ENCODE measurements at regions of chr1 and their contacts with region 1.

Region 1: GRCh38 chr1:87953732-87954344 is 625.2 kb downstream of the LMO4 start:
- DNase-seq: peak; percentile 57
- H3K4me3 ChIP-seq: no peak overlapping the region
- H3K27ac ChIP-seq: no peak overlapping the region
- H3K4me1 ChIP-seq: no peaks in the 10 kb centered on the region
- H3K27me3 ChIP-seq: no peaks in the 10 kb centered on the region
- CTCF ChIP-seq: peak; percentile 63 to 74 (median 69)
- POLR2A ChIP-seq: no peak

Region 2: DNA sequence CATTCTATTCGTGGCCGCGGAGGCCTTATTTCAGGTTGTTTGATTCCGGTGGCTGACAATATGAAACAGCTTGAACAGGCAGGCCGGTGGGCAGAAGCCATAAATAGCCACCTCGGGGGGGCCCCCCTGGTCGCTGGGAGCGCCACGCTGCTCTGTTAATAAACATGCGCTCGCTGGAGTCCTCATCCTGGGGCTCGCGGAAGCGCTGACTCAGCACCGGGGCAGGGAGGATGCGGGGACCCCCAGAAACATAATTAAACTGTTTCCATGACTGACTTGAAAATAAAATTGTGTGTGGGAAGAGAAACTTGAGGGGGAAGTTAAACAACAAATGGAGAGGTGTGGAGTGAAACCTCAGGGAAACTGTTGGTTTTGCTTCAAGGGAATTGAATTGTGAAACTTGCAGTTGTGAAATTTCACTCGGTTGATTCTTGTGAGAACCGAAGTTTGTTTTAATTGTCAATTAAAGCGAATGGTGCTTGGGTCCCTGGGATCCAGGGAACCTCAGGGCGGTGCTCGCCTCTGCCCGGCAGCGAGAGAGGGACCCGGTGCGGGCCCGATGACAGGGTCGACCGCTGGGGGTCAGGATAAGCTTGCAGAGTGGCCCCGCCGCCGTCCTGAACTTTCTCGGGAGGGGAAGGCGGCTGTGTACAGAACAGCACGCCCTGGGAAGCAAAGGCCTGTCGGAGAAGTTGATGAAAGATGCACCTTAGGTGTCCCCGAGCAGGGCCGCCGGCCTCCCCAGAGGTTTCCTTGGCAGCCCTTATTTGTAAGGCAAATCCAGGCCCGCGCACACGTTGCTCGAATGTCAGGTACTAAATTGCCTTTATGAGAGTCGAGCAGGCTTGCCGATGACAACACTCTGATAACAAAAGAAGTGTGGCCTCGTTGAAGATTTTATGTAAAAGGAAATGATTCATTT is 802.1 kb before region 1 on chr1:
- intact Hi-C with region 1: loop called (anchors 10 kb)
- DNase-seq: peak; percentile 8
- H3K4me3 ChIP-seq: no peak overlapping the region
- H3K27ac ChIP-seq: peak overlapping the region in 1 of 2 donors; percentile 43
- H3K4me1 ChIP-seq: no peaks in the 10 kb centered on the region
- H3K27me3 ChIP-seq: no peaks in the 10 kb centered on the region
- CTCF ChIP-seq: peak in 3 of 4 experiments; percentile 24 to 41 (median 38)
- POLR2A ChIP-seq: no peak

Region 3: GRCh38 chr1:87684194-87684593 is 269.6 kb before region 1 on chr1:
- intact Hi-C with region 1: loop called (anchors 5 kb)
- DNase-seq: peak; percentile 5
- H3K4me3 ChIP-seq: peak overlapping the region; percentile 18 to 32
- H3K27ac ChIP-seq: peak overlapping the region; percentile 47 to 63
- H3K4me1 ChIP-seq: no peaks in the 10 kb centered on the region
- H3K27me3 ChIP-seq: no peaks in the 10 kb centered on the region
- CTCF ChIP-seq: no peak
- POLR2A ChIP-seq: no peak

Region 4: DNA sequence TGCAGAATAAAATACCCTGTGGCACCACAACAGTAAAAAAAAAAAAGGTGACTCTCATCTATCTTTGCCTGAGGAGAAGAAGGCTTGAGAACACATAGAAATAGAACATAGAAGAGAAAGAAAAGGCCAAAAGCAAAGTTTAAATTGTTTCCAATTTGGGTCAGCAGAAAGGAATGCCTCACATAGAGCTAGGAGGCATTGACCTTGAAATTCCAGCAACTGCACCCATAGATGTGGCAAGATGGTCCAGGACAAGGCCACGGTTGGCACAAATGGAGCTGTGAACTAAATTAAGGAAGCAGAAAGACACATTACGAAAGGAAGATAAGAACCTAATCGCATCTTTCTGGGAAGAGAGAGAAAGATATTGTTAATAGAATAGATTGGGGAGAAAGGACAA is 36.9 kb before region 1 on chr1:
- intact Hi-C with region 1: no loop called
- DNase-seq: no peak
- H3K4me3 ChIP-seq: no peak overlapping the region
- H3K27ac ChIP-seq: no peak overlapping the region
- H3K4me1 ChIP-seq: no peaks in the 10 kb centered on the region
- H3K27me3 ChIP-seq: no peaks in the 10 kb centered on the region
- CTCF ChIP-seq: no peak
- POLR2A ChIP-seq: no peak

Region 5: GRCh38 chr1:88371396-88371795 is 417.6 kb after region 1 on chr1:
- intact Hi-C with region 1: no loop called
- DNase-seq: no peak
- H3K4me3 ChIP-seq: no peak overlapping the region
- H3K27ac ChIP-seq: no peak overlapping the region
- H3K4me1 ChIP-seq: no peaks in the 10 kb centered on the region
- H3K27me3 ChIP-seq: no peaks in the 10 kb centered on the region
- CTCF ChIP-seq: no peak
- POLR2A ChIP-seq: no peak

Measured in prostate gland (tissue), 2 donors.